Heart left ventricle (tissue), 16 donors: ENCODE measurements at regions of chr3 and their contacts with region 1.

Region 1: DNA sequence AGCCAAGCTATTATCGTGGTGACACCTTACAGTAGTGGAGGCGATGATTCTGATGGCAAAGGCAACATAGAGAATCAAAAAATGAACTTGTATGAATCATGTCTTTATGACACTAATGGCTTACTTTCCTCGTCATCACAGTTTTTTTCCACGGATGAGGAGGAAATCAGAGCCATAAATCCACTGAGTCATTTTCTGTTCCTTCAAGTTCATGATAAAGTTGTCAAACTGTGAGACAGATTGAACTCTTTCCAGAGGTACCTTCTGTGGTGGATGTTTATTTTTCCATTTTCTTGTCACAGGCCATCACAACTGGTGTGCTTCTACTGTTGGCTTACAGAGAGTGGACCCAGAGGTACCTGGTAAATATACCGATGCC is 8.5 kb downstream of the TMEM212 start:
- DNase-seq: no peak
- ATAC-seq: no peak
- H3K4me3 ChIP-seq: no peak overlapping the region
- H3K27ac ChIP-seq: no peak overlapping the region
- H3K4me1 ChIP-seq: peaks cover 0 to 22% (median 6%) of the 10 kb centered on the region in 12 donors
- H3K27me3 ChIP-seq: no peaks in the 10 kb centered on the region
- CTCF ChIP-seq: no peak
- POLR2A ChIP-seq: no peak

Region 2: DNA sequence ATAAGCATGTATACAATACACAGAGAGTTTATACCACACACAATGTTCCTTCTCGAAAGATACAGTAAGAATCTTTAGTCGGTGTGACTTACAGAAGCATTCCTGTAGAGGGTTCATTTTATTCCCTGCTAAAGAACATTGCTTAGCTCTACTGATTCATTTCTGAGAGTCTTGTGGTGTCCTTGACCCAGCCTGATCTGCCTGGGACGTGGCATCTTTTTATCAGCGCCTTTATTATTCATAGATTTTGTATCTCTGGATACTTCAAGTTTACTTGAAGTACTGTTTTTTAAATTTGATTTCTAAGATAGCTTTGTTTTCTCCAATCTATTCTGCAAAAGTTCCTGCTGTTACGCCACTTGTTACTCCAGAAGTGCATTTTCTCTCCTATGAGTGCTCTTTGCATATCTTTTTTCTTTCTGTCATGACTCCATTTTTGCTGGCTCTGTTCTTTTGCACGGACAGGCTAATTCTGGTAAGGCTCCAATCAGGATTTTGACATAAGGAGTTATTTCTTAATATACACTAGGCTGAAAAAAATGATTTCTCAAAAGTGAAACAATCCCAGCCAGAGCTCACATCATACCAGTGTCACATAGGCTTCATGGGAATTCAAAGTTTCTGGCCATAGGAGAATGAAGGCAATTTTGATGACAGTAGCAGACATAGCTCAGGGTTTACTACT is 277.0 kb before region 1 on chr3:
- intact Hi-C with region 1: no loop called
- DNase-seq: no peak
- ATAC-seq: no peak
- H3K4me3 ChIP-seq: no peak overlapping the region
- H3K27ac ChIP-seq: no peak overlapping the region
- H3K4me1 ChIP-seq: no peaks in the 10 kb centered on the region
- H3K27me3 ChIP-seq: no peaks in the 10 kb centered on the region
- CTCF ChIP-seq: no peak
- POLR2A ChIP-seq: no peak

Region 3: DNA sequence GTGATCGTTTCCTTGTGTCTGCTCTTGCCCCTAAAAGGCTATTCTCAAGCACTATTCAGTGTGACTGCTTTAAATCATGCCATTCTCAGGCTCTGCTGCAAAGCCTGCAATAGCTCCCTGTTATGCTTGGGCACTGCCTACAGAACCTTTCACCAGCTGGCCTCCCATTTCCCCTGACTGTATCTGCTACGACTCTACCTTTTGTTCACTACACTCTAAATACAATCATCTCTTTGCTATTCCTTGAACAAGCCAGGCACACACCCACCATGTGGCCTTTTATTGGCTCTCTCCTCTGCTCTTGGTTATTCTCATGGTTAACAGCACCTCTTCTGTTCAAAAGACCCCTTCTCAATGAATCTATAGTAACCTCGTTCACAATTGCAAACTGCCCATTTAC is 158.1 kb after region 1 on chr3:
- intact Hi-C with region 1: loop called in 1 of 10 experiments (anchors 5 kb)
- DNase-seq: no peak
- ATAC-seq: no peak
- H3K4me3 ChIP-seq: no peak overlapping the region
- H3K27ac ChIP-seq: no peak overlapping the region
- H3K4me1 ChIP-seq: peaks cover 0 to 5% (median 0%) of the 10 kb centered on the region in 12 donors
- H3K27me3 ChIP-seq: no peaks in the 10 kb centered on the region
- CTCF ChIP-seq: no peak
- POLR2A ChIP-seq: no peak